Esophagus squamous epithelium (tissue), 5 donors: ENCODE measurements at regions of chr10 and their contacts with region 1.

Region 1: DNA sequence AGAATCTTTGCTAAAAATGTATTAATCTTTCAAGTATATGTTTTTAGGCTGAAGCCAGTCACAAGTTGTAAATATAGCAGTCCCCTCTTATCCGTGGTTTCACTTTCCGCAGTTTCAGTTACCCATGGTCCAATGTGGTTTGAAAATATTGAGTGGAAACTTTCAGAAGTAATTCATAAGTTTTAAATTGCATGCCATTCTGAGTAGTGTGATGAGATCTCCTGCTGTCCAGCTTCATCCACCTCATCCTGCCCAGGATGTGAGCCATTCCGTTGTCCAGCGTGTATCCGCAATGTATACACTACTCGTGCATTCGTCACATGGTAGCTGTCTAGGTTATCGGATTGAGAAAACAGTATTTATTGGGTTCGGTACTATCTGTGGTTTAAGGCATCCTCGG is 12.2 kb downstream of the PDCD4 start:
- DNase-seq: no peak
- H3K4me3 ChIP-seq: peak overlapping the region in 1 of 4 donors; percentile 13
- H3K27ac ChIP-seq: peak overlapping the region in 2 of 4 donors; percentile 4 to 32
- H3K4me1 ChIP-seq: peaks cover 0 to 67% (median under 1%) of the 10 kb centered on the region in 3 donors
- H3K27me3 ChIP-seq: no peaks in the 10 kb centered on the region
- CTCF ChIP-seq: no peak
- POLR2A ChIP-seq: no peak

Region 2: GRCh38 chr10:110304780-110305421 is 579.0 kb before region 1 on chr10 and contains the start of gene SMNDC1:
- intact Hi-C with region 1: loop called (anchors 10 kb)
- DNase-seq: peak; percentile 81
- H3K4me3 ChIP-seq: peak within 1 kb of the TSS; percentile 83 to 99 (median 91)
- H3K27ac ChIP-seq: peak within 1 kb of the TSS; percentile 96 to 98 (median 98)
- H3K4me1 ChIP-seq: peaks cover 13 to 52% (median 33%) of the 10 kb centered on the region in 3 donors
- H3K27me3 ChIP-seq: no peaks in the 10 kb centered on the region
- CTCF ChIP-seq: peak in 1 of 6 experiments; percentile 22
- POLR2A ChIP-seq: peak in 2 of 4 donors; percentile 40 to 79
- total RNA-seq, gene SMNDC1: 9.5 to 13.9 (median 10.9) TPM

Region 3: GRCh38 chr10:110584006-110584405 is 299.9 kb before region 1 on chr10:
- intact Hi-C with region 1: no loop called
- DNase-seq: no peak
- H3K4me3 ChIP-seq: no peak overlapping the region
- H3K27ac ChIP-seq: no peak overlapping the region
- H3K4me1 ChIP-seq: no peaks in the 10 kb centered on the region
- H3K27me3 ChIP-seq: no peaks in the 10 kb centered on the region
- CTCF ChIP-seq: no peak
- POLR2A ChIP-seq: no peak

Region 4: DNA sequence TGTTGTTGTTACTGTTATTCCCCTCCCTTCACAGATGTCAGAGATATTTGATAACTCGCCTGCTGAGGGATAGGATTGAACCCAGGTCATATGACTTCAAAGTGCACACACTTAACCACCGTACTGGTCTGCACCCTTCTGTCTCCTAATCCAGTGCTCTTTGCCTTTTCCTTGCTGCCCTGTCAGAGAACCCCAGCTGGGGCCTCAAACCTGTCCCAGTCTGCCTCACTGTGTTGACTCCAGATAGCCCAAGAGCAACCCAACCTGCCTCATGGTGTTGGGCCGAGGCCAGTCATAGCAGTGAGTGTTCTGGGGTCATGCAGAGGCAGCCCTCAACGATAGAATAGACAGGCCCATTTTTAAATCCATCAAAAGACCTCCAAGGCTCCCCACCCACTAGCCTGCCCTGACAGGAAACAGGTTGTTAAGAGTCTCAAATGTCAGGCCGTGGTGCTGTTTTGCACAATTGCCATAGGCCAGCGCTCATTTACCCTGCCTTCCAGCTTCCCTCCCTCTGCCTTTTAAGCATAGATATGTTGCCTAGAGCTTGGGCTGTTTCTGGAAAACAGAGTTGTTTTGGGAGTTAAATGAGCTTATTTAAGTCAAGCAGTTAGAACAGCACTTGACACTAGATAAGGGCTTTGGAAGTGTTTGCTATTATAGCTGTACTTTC is 49.2 kb before region 1 on chr10:
- intact Hi-C with region 1: no loop called
- DNase-seq: no peak
- H3K4me3 ChIP-seq: peak overlapping the region in 2 of 4 donors; percentile 35 to 41
- H3K27ac ChIP-seq: peak overlapping the region; percentile 74 to 91 (median 90)
- H3K4me1 ChIP-seq: peaks cover 30 to 85% (median 45%) of the 10 kb centered on the region in 3 donors
- H3K27me3 ChIP-seq: no peaks in the 10 kb centered on the region
- CTCF ChIP-seq: peak in 1 of 6 experiments; percentile 3
- POLR2A ChIP-seq: no peak